Activated CD8-positive, alpha-beta T cell treated with anti-CD3 and anti-CD28 coated beads, Interleukin-2, amount 10 ng/mL, durations not matched to agents 7 days and 5 days (primary cell): ENCODE measurements at regions of chr22 and their contacts with region 1.

Region 1: GRCh38 chr22:31272522-31273446 is 19.5 kb downstream of the PIK3IP1 start:
- DNase-seq: peak; percentile 67
- ATAC-seq: peak; percentile 77
- H3K4me3 Mint-ChIP-seq: no peak overlapping the region
- H3K27ac Mint-ChIP-seq: peak overlapping the region; percentile 57
- H3K4me1 Mint-ChIP-seq: peaks cover 2% of the 10 kb centered on the region
- H3K27me3 Mint-ChIP-seq: no peaks in the 10 kb centered on the region

Region 2: GRCh38 chr22:31107178-31107893 is 165.4 kb before region 1 on chr22 and contains the start of gene SELENOM:
- CTCF ChIA-PET with region 1: interaction called, 15 read pairs
- POLR2A ChIA-PET with region 1: no interaction called
- DNase-seq: peak; percentile 90
- ATAC-seq: peak; percentile 97
- H3K4me3 Mint-ChIP-seq: peak within 1 kb of the TSS; percentile 86
- H3K27ac Mint-ChIP-seq: peak within 1 kb of the TSS; percentile 72
- H3K4me1 Mint-ChIP-seq: peaks cover 10% of the 10 kb centered on the region
- H3K27me3 Mint-ChIP-seq: no peaks in the 10 kb centered on the region
- total RNA-seq, gene SELENOM: 0.76 to 0.87 TPM

Region 3: DNA sequence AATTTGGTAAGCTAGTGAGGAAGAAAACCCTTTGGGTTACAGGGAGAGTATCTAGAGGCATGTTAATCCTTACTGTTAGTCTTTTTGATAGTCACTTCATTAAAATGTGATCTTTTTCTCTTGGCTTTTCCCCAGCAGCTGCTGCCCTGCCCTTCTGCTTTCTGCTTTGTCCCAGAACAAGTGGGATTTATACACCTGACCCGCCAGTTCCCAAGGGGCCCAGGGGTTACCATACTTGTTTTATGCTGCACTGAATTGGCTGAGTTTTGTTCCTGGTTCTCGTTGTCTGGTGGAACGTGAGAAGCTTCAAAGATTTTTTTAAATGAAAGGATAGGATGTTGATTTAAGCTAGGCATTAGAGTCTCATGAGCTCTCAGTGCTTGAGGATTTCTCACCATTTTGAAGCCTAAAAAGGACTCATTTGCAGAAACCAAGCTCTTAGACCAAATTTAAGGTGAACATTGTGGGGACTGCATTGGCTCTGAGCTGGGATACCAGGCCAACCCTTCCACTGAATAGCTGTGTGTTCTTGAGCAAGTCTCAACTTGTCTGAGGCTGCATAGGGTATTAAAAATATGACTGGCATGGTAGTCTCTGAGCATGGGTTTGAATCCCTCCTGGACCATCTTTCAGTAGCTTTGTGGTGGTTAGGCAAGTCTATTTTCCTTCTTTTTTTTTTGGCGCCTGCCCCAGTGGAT is 54.1 kb before region 1 on chr22:
- CTCF ChIA-PET with region 1: interaction called, 83 read pairs
- POLR2A ChIA-PET with region 1: no interaction called
- DNase-seq: no peak
- ATAC-seq: no peak
- H3K4me3 Mint-ChIP-seq: no peak overlapping the region
- H3K27ac Mint-ChIP-seq: peak overlapping the region; percentile 47
- H3K4me1 Mint-ChIP-seq: peaks cover 47% of the 10 kb centered on the region
- H3K27me3 Mint-ChIP-seq: no peaks in the 10 kb centered on the region

Region 4: GRCh38 chr22:31241200-31241599 is 31.6 kb before region 1 on chr22:
- CTCF ChIA-PET with region 1: interaction called, 17 read pairs
- POLR2A ChIA-PET with region 1: no interaction called
- DNase-seq: no peak
- ATAC-seq: no peak
- H3K4me3 Mint-ChIP-seq: no peak overlapping the region
- H3K27ac Mint-ChIP-seq: no peak overlapping the region
- H3K4me1 Mint-ChIP-seq: peaks cover 27% of the 10 kb centered on the region
- H3K27me3 Mint-ChIP-seq: no peaks in the 10 kb centered on the region

Region 5: GRCh38 chr22:31253949-31254348 is 18.8 kb before region 1 on chr22:
- CTCF ChIA-PET with region 1: interaction called, 58 read pairs
- POLR2A ChIA-PET with region 1: no interaction called
- DNase-seq: no peak
- ATAC-seq: no peak
- H3K4me3 Mint-ChIP-seq: no peak overlapping the region
- H3K27ac Mint-ChIP-seq: no peak overlapping the region
- H3K4me1 Mint-ChIP-seq: no peaks in the 10 kb centered on the region
- H3K27me3 Mint-ChIP-seq: no peaks in the 10 kb centered on the region

Region 6: DNA sequence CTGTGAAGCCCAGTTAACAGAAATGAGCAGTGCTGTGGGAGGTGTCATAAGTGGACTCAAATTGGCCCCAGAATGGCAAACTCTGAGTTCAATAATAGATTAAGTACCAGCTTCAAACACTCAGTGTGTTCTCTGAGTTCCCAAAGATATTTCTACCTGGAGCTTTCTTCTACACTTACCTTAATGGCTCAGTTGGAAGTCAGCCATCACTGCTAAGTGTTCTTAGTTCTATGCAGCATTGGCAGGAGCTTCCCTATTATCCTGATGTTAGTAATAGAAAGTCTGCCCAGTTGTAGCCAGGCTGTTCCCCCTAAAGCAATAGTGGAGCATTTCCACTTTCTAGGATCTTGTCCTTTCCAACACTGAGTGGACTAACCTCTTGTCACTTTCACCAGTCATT is 29.2 kb after region 1 on chr22:
- CTCF ChIA-PET with region 1: interaction called, 17 read pairs
- POLR2A ChIA-PET with region 1: no interaction called
- DNase-seq: no peak
- ATAC-seq: no peak
- H3K4me3 Mint-ChIP-seq: no peak overlapping the region
- H3K27ac Mint-ChIP-seq: no peak overlapping the region
- H3K4me1 Mint-ChIP-seq: peaks cover 14% of the 10 kb centered on the region
- H3K27me3 Mint-ChIP-seq: no peaks in the 10 kb centered on the region

Region 7: GRCh38 chr22:31363885-31364465 is 91.2 kb after region 1 on chr22:
- CTCF ChIA-PET with region 1: no interaction called
- POLR2A ChIA-PET with region 1: no interaction called
- DNase-seq: no peak
- ATAC-seq: no peak
- H3K4me3 Mint-ChIP-seq: no peak overlapping the region
- H3K27ac Mint-ChIP-seq: no peak overlapping the region
- H3K4me1 Mint-ChIP-seq: peaks cover 5% of the 10 kb centered on the region
- H3K27me3 Mint-ChIP-seq: no peaks in the 10 kb centered on the region